ENCODE measurements at regions of chr15 and their contacts with region 1.

Region 1: DNA sequence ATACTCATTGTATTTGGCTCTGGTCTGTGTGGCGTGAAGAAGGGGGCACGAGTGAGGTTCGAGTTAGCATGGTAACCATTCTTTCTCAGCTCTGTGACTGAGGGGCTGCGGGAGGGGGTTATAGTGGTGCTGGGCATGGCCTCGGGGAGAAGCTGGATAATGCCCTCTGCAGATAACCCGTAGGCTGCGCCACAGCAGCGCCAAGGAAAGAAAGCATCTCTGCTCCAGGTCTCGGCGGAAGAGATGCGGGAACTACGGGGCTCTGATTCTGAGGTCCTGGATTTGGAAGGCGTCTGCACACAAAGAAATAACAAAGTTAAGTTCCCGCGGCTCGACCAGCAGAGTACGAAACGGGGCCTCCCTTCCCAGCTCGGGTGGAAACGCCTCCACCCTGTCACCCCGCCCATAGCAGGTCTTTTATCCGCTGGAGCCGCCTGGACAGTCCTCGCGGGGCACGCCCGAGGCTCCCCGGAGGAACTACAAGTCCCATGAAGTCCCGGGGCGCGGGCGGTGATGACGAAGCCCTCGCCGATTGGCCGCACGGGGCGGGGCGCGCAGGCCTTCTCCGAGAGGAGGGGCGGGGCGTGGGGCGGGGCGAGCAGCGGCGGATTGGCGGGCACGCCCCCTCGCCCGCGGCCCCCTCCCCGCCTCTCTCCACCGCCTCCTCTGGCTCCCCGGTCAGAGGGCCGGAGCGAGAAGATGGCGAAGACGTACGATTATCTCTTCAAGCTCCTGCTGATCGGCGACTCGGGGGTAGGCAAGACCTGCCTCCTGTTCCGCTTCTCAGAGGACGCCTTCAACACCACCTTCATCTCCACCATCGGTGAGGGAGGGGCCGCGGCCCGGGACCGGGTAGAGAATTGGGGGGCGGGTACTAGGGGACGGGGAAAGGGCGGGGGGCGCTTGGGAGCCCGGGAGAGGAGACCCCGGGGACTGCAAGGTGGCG is at the start of gene RAB8B:
- DNase-seq: peak; percentile 93 to 95 (median 94)
- H3K4me3 ChIP-seq: peak within 1 kb of the TSS; percentile 93 to 99 (median 96)
- H3K4me3 Mint-ChIP-seq: peak within 1 kb of the TSS; percentile 96 to 100
- H3K27ac ChIP-seq: peak within 1 kb of the TSS; percentile 92 to 93
- H3K27ac Mint-ChIP-seq: peak within 1 kb of the TSS; percentile 93 to 100 (median 96)
- H3K4me1 ChIP-seq: peaks cover 42 to 49% of the 10 kb centered on the region in 2 donors
- H3K4me1 Mint-ChIP-seq: peaks cover 47% of the 10 kb centered on the region
- H3K27me3 ChIP-seq: no peaks in the 10 kb centered on the region
- H3K27me3 Mint-ChIP-seq: peaks cover 0 to 3% (median 2%) of the 10 kb centered on the region in 3 donors
- CTCF ChIP-seq: no peak
- polyA plus RNA-seq, gene RAB8B: 22.0 to 77.3 (median 58.9) TPM

Region 2: GRCh38 chr15:63122002-63122893 is 67.0 kb before region 1 on chr15:
- intact Hi-C with region 1: loop called in 1 of 2 experiments (anchors 5 kb)
- DNase-seq: peak; percentile 96 to 99 (median 97)
- H3K4me3 ChIP-seq: peak overlapping the region; percentile 80 to 86 (median 81)
- H3K4me3 Mint-ChIP-seq: peak overlapping the region; percentile 91 to 97
- H3K27ac ChIP-seq: peak overlapping the region; percentile 92 to 98
- H3K27ac Mint-ChIP-seq: peak overlapping the region; percentile 89 to 96 (median 94)
- H3K4me1 ChIP-seq: peaks cover 12 to 14% of the 10 kb centered on the region in 2 donors
- H3K4me1 Mint-ChIP-seq: peaks cover 21% of the 10 kb centered on the region
- H3K27me3 ChIP-seq: no peaks in the 10 kb centered on the region
- H3K27me3 Mint-ChIP-seq: peaks cover 0 to 2% (median 0%) of the 10 kb centered on the region in 3 donors
- CTCF ChIP-seq: peak; percentile 7

Region 3: DNA sequence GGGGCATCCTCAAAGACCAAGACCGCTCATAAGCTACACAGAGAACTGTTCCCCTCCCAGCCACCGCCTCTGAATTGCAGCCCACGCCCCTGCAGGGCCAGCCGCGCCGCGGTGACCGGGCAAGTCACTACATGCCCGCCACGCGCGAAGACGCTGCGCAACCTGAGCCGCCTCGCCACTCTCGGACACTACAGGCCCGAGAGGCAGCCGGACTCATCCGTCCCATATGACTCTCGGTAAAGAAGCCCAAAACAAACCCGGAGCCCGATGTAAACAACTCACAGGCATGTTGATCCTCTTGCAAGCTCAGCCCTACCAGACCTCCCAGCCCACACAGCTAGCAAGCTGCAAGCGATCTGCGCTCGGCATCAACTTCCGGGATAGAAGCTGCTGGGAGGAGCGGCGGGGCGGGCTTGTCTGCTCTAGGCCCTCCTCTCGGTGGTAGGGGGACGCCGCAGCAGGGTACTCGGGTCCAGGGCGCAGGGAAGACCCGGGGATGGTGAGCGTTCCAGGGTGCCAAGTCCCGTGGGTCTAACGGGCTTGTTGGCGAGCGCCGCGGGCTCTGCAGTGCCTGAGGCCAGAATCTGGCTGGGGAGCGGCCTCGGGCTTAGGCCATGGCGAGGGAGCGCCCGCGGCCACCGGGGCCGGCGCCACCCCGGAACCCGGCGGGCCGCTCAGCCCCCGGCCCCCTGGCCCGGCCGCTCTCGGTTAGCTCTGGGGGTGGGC is 31.9 kb before region 1 on chr15 and contains the start of gene RPS27L:
- intact Hi-C with region 1: loop called in 1 of 2 experiments (anchors 5 kb)
- DNase-seq: peak; percentile 75 to 83 (median 79)
- H3K4me3 ChIP-seq: peak within 1 kb of the TSS; percentile 89 to 98 (median 95)
- H3K4me3 Mint-ChIP-seq: peak within 1 kb of the TSS; percentile 99 to 100
- H3K27ac ChIP-seq: peak within 1 kb of the TSS; percentile 95 to 96
- H3K27ac Mint-ChIP-seq: peak within 1 kb of the TSS; percentile 96 to 99 (median 99)
- H3K4me1 ChIP-seq: peaks cover 13 to 22% of the 10 kb centered on the region in 2 donors
- H3K4me1 Mint-ChIP-seq: peaks cover 21% of the 10 kb centered on the region
- H3K27me3 ChIP-seq: no peaks in the 10 kb centered on the region
- H3K27me3 Mint-ChIP-seq: no peaks in the 10 kb centered on the region
- CTCF ChIP-seq: no peak
- polyA plus RNA-seq, gene RPS27L: 16.1 to 196 (median 178) TPM

Region 4: GRCh38 chr15:63277038-63277892 is 88.1 kb after region 1 on chr15 and contains the start of gene APH1B:
- intact Hi-C with region 1: loop called in 1 of 2 experiments (anchors 2 kb)
- DNase-seq: peak; percentile 54 to 67 (median 61)
- H3K4me3 ChIP-seq: peak within 1 kb of the TSS; percentile 75 to 98 (median 96)
- H3K4me3 Mint-ChIP-seq: peak within 1 kb of the TSS; percentile 88 to 93
- H3K27ac ChIP-seq: peak within 1 kb of the TSS; percentile 74 to 94
- H3K27ac Mint-ChIP-seq: peak within 1 kb of the TSS; percentile 81 to 91 (median 89)
- H3K4me1 ChIP-seq: peaks cover 28 to 36% of the 10 kb centered on the region in 2 donors
- H3K4me1 Mint-ChIP-seq: peaks cover 34% of the 10 kb centered on the region
- H3K27me3 ChIP-seq: no peaks in the 10 kb centered on the region
- H3K27me3 Mint-ChIP-seq: peaks cover 0 to 4% (median 0%) of the 10 kb centered on the region in 3 donors
- CTCF ChIP-seq: no peak
- polyA plus RNA-seq, gene APH1B: 13.6 to 57.1 (median 54.8) TPM

Measured in CD14-positive monocyte (primary cell).